ENCODE measurements at regions of chr14 and their contacts with region 1.

Region 1: GRCh38 chr14:76977793-76978720 is 50.5 kb downstream of the IRF2BPL start:
- DNase-seq: peak; percentile 70
- H3K4me3 Mint-ChIP-seq: no peak overlapping the region
- H3K27ac Mint-ChIP-seq: peak overlapping the region; percentile 84
- H3K4me1 Mint-ChIP-seq: peaks cover 24% of the 10 kb centered on the region
- H3K27me3 Mint-ChIP-seq: no peaks in the 10 kb centered on the region

Region 2: GRCh38 chr14:76848890-76849289 is 129.2 kb before region 1 on chr14:
- CTCF ChIA-PET with region 1: no interaction called
- POLR2A ChIA-PET with region 1: no interaction called
- DNase-seq: no peak
- H3K4me3 Mint-ChIP-seq: no peak overlapping the region
- H3K27ac Mint-ChIP-seq: no peak overlapping the region
- H3K4me1 Mint-ChIP-seq: peaks cover 10% of the 10 kb centered on the region
- H3K27me3 Mint-ChIP-seq: peaks cover 6% of the 10 kb centered on the region

Region 3: GRCh38 chr14:76894308-76894892 is 83.7 kb before region 1 on chr14:
- CTCF ChIA-PET with region 1: no interaction called
- POLR2A ChIA-PET with region 1: no interaction called
- DNase-seq: no peak
- H3K4me3 Mint-ChIP-seq: no peak overlapping the region
- H3K27ac Mint-ChIP-seq: no peak overlapping the region
- H3K4me1 Mint-ChIP-seq: no peaks in the 10 kb centered on the region
- H3K27me3 Mint-ChIP-seq: no peaks in the 10 kb centered on the region

Region 4: GRCh38 chr14:76962303-76962660 is 15.8 kb before region 1 on chr14:
- CTCF ChIA-PET with region 1: interaction called, 35 read pairs
- POLR2A ChIA-PET with region 1: interaction called, 6 read pairs
- DNase-seq: no peak
- H3K4me3 Mint-ChIP-seq: peak overlapping the region; percentile 66
- H3K27ac Mint-ChIP-seq: peak overlapping the region; percentile 96
- H3K4me1 Mint-ChIP-seq: peaks cover 90% of the 10 kb centered on the region
- H3K27me3 Mint-ChIP-seq: no peaks in the 10 kb centered on the region

Region 5: GRCh38 chr14:77219591-77219990 is 241.5 kb after region 1 on chr14:
- CTCF ChIA-PET with region 1: no interaction called
- POLR2A ChIA-PET with region 1: no interaction called
- DNase-seq: no peak
- H3K4me3 Mint-ChIP-seq: no peak overlapping the region
- H3K27ac Mint-ChIP-seq: no peak overlapping the region
- H3K4me1 Mint-ChIP-seq: no peaks in the 10 kb centered on the region
- H3K27me3 Mint-ChIP-seq: peaks cover 13% of the 10 kb centered on the region

Measured in activated CD4-positive, alpha-beta T cell treated with anti-CD3 and anti-CD28 coated beads, Interleukin-2, amount 10 ng/mL, durations not matched to agents 7 days and 5 days (primary cell).